ENCODE measurements at regions of chr5 and their contacts with region 1.

Region 1: DNA sequence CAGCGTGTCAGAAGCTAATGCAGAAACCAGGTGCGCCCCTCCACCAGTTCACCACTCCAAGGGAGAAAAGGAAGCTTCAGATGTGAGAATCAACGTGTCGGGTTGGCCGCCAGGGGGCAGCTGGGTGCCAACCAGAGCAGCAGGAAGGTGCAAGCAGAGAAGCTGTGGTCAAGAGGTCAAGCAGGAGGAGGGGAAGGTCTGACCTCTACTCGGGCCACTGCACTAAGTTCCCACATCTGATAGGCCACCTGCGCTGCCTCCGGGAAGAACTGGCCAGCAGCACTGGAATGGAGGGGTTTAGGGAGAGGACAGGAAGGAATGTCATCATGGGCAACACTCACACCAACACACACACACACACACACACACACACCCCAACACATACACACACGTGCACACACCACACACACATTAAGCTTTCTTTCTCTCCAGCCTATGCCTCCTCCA is 31.4 kb downstream of the ANXA6 start:
- DNase-seq: peak; percentile 85 to 86
- H3K4me3 ChIP-seq: no peak overlapping the region
- H3K4me3 Mint-ChIP-seq: no peak overlapping the region
- H3K27ac Mint-ChIP-seq: no peak overlapping the region
- H3K4me1 ChIP-seq: peaks cover 15% of the 10 kb centered on the region
- H3K4me1 Mint-ChIP-seq: peaks cover 6% of the 10 kb centered on the region
- H3K27me3 ChIP-seq: no peaks in the 10 kb centered on the region
- H3K27me3 Mint-ChIP-seq: no peaks in the 10 kb centered on the region
- CTCF ChIP-seq: peak; percentile 89 to 91

Region 2: GRCh38 chr5:151051066-151051930 is 74.9 kb before region 1 on chr5:
- CTCF ChIA-PET with region 1: interaction called, 12 read pairs
- POLR2A ChIA-PET with region 1: no interaction called
- intact Hi-C with region 1: no loop called
- DNase-seq: peak; percentile 72 to 78
- H3K4me3 ChIP-seq: no peak overlapping the region
- H3K4me3 Mint-ChIP-seq: no peak overlapping the region
- H3K27ac Mint-ChIP-seq: peak overlapping the region; percentile 53
- H3K4me1 ChIP-seq: peaks cover 6% of the 10 kb centered on the region; the same call in 1 of the 2 replicates
- H3K4me1 Mint-ChIP-seq: peaks cover 10% of the 10 kb centered on the region
- H3K27me3 ChIP-seq: no peaks in the 10 kb centered on the region
- H3K27me3 Mint-ChIP-seq: no peaks in the 10 kb centered on the region
- CTCF ChIP-seq: peak; percentile 81 to 89

Region 3: GRCh38 chr5:151115274-151115905 is 10.8 kb before region 1 on chr5:
- CTCF ChIA-PET with region 1: interaction called, 20 read pairs
- POLR2A ChIA-PET with region 1: no interaction called
- intact Hi-C with region 1: no loop called
- DNase-seq: peak; percentile 74 to 83
- H3K4me3 ChIP-seq: no peak overlapping the region
- H3K4me3 Mint-ChIP-seq: no peak overlapping the region
- H3K27ac Mint-ChIP-seq: no peak overlapping the region
- H3K4me1 ChIP-seq: no peaks in the 10 kb centered on the region
- H3K4me1 Mint-ChIP-seq: peaks cover 7% of the 10 kb centered on the region
- H3K27me3 ChIP-seq: no peaks in the 10 kb centered on the region
- H3K27me3 Mint-ChIP-seq: no peaks in the 10 kb centered on the region
- CTCF ChIP-seq: peak; percentile 93 to 94

Region 4: DNA sequence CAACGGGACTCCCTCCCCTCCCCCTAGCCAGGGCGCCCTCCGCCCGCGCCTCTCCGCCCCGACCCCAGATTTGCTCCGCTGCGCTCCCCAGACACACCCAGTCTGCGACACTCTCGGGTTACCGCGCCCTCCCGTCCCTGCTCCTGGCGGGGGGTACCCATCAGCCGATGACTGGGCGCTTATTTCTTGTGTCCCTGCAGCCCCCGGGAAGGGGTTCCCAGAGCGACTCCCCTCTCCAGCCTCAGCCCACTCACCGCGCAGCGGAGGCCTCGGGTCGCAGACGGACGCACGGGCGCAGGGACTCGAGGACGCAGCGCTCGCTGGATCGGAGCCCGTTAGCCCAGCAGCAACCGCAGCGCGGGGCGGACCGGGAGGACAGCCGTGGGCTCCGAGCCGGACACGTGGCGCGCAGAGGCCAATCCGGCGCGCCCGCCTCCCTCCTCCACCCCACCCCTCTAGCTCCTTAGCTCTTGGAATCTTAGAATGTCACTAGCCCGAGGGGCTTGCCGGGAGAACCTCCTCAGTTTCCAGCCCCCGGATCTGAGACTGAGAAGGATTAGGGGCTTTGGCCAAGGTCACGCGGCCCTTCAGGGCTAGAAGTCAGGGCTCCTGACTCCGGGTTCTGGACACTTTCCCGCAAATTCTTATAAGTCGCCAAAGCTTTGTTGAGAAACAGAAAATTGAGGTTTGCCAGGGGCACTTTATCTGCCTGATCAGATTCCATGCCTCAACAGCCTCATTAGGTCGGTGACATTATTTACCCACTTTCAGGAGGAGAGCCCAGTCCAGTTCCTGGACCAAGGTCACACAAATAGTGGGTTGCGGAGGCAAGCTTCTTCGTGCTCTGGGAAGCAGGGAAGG is 31.4 kb after region 1 on chr5 and contains the start of gene ANXA6:
- CTCF ChIA-PET with region 1: interaction called, 127 read pairs
- POLR2A ChIA-PET with region 1: interaction called, 15 read pairs
- intact Hi-C with region 1: loop called (anchors 1 kb)
- DNase-seq: peak; percentile 76 to 83
- H3K4me3 ChIP-seq: peak within 1 kb of the TSS; percentile 60
- H3K4me3 Mint-ChIP-seq: peak within 1 kb of the TSS; percentile 74
- H3K27ac Mint-ChIP-seq: peak within 1 kb of the TSS; percentile 69
- H3K4me1 ChIP-seq: peaks cover 36% of the 10 kb centered on the region
- H3K4me1 Mint-ChIP-seq: peaks cover 10% of the 10 kb centered on the region
- H3K27me3 ChIP-seq: no peaks in the 10 kb centered on the region
- H3K27me3 Mint-ChIP-seq: no peaks in the 10 kb centered on the region
- CTCF ChIP-seq: no peak
- total RNA-seq, gene ANXA6: 43.0 and 51.9 TPM in 2 replicates

Region 5: GRCh38 chr5:151164686-151165392 is 38.6 kb after region 1 on chr5:
- CTCF ChIA-PET with region 1: interaction called, 127 read pairs
- POLR2A ChIA-PET with region 1: interaction called, 6 read pairs
- intact Hi-C with region 1: loop called (anchors 1 kb)
- DNase-seq: peak; percentile 74 to 85
- H3K4me3 ChIP-seq: no peak overlapping the region
- H3K4me3 Mint-ChIP-seq: no peak overlapping the region
- H3K27ac Mint-ChIP-seq: no peak overlapping the region
- H3K4me1 ChIP-seq: no peaks in the 10 kb centered on the region
- H3K4me1 Mint-ChIP-seq: no peaks in the 10 kb centered on the region
- H3K27me3 ChIP-seq: no peaks in the 10 kb centered on the region
- H3K27me3 Mint-ChIP-seq: no peaks in the 10 kb centered on the region
- CTCF ChIP-seq: peak; percentile 67 to 92

Region 6: GRCh38 chr5:151239237-151239861 is 113.1 kb after region 1 on chr5:
- CTCF ChIA-PET with region 1: interaction called, 13 read pairs
- POLR2A ChIA-PET with region 1: interaction called, 3 read pairs
- intact Hi-C with region 1: loop called (anchors 1 kb)
- DNase-seq: peak; percentile 70 to 74
- H3K4me3 ChIP-seq: no peak overlapping the region
- H3K4me3 Mint-ChIP-seq: no peak overlapping the region
- H3K27ac Mint-ChIP-seq: no peak overlapping the region
- H3K4me1 ChIP-seq: peaks cover 9% of the 10 kb centered on the region
- H3K4me1 Mint-ChIP-seq: peaks cover 9% of the 10 kb centered on the region
- H3K27me3 ChIP-seq: no peaks in the 10 kb centered on the region
- H3K27me3 Mint-ChIP-seq: no peaks in the 10 kb centered on the region
- CTCF ChIP-seq: peak; percentile 87 to 92

Region 7: GRCh38 chr5:151298063-151298855 is 172.0 kb after region 1 on chr5:
- CTCF ChIA-PET with region 1: interaction called, 5 read pairs
- POLR2A ChIA-PET with region 1: no interaction called
- intact Hi-C with region 1: loop called (anchors 2 kb)
- DNase-seq: peak; percentile 68 to 75
- H3K4me3 ChIP-seq: no peak overlapping the region
- H3K4me3 Mint-ChIP-seq: no peak overlapping the region
- H3K27ac Mint-ChIP-seq: no peak overlapping the region
- H3K4me1 ChIP-seq: peaks cover 3% of the 10 kb centered on the region; the same call in 1 of the 2 replicates
- H3K4me1 Mint-ChIP-seq: no peaks in the 10 kb centered on the region
- H3K27me3 ChIP-seq: peaks cover 2% of the 10 kb centered on the region; the same call in 1 of the 2 replicates
- H3K27me3 Mint-ChIP-seq: peaks cover 9% of the 10 kb centered on the region
- CTCF ChIP-seq: peak; percentile 64 to 74